ENCODE measurements at regions of chr20 and their contacts with region 1.

Region 1: DNA sequence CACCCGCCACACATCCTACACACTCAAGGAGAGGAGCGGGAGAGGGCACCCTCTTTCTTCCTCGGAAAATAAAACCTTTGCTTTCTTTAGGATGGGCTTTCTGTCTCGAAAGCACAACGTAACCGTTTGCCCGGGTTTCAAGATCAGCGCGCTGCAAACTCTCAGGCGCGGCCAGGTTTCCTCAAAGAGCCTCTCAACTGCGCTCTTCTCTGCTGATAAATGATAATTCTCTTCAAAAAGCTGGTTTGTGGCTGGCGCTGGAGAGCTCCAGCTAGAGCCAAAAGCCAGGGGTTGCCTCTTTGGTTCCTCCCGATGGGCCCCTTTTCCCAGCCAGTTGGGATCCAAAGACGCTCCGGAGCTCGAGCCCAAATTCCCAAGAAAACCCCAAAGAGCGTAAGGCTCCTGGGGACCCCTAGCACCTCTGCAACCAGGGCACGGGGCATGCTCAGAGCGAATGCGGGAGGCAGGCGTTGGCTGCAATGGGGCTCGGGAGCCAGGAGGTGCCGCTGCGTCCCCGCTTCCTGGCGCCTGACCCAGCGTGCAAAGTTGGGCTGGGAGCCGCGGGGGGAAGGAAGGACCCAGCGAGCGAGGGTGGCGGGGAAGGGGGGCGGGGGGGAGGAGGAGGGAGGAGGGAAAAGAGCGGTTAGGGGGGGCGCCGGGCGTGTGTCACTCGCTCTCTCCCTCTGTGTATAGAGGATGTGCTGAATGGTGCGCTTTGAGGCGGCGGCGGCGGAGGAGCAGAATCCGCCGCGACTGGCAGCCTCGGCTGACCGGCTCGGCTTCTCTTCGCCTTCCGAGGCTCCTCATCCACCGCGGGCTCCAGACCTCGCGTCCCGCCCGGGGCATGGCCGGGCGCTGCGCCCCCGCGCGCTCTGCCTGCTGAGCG is at the start of gene PLCB1:
- DNase-seq: peak; percentile 36
- ATAC-seq: peak; percentile 92
- H3K4me3 Mint-ChIP-seq: peak within 1 kb of the TSS; percentile 69
- H3K27ac Mint-ChIP-seq: no peak within 1 kb of the TSS
- H3K4me1 Mint-ChIP-seq: peaks cover 13% of the 10 kb centered on the region
- H3K27me3 Mint-ChIP-seq: peaks cover 34% of the 10 kb centered on the region
- CTCF ChIP-seq: no peak
- total RNA-seq, gene PLCB1: 0.29 and 0.86 TPM in 2 replicates

Region 2: DNA sequence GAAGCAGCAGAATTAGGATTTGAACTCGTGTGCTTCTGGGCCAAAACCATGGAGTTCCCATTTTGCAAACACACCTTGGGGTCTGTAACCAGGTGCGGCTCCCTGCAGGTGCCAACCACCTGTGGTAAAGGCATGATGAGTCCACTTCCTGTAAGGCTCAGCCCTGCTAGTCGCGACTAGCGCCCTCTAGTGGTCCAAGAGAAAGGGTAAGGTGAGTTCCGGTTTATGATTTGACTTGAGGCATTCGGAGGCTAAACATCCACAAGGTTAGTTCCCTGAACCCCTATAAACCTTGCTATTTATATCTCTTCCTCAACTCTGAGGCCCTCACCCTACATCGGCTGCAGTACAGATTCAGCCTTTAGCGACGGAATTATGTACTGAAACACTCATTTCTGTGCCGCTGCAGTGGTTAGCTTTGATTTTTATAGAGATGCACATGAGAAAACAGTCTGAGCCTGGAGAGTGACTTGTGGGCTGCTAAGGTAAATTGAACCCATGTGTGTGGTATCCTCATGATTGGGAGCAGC is 173.7 kb after region 1 on chr20:
- CTCF ChIA-PET with region 1: no interaction called
- POLR2A ChIA-PET with region 1: no interaction called
- intact Hi-C with region 1: loop called (anchors 1 kb)
- DNase-seq: no peak
- ATAC-seq: no peak
- H3K4me3 Mint-ChIP-seq: no peak overlapping the region
- H3K27ac Mint-ChIP-seq: no peak overlapping the region
- H3K4me1 Mint-ChIP-seq: no peaks in the 10 kb centered on the region
- H3K27me3 Mint-ChIP-seq: no peaks in the 10 kb centered on the region
- CTCF ChIP-seq: no peak

Measured in activated B cell treated with CpG ODN at 0.5 μM for 24 hours (primary cell).